WTC11 (cell line): ENCODE measurements at regions of chr12 and their contacts with region 1.

Region 1: DNA sequence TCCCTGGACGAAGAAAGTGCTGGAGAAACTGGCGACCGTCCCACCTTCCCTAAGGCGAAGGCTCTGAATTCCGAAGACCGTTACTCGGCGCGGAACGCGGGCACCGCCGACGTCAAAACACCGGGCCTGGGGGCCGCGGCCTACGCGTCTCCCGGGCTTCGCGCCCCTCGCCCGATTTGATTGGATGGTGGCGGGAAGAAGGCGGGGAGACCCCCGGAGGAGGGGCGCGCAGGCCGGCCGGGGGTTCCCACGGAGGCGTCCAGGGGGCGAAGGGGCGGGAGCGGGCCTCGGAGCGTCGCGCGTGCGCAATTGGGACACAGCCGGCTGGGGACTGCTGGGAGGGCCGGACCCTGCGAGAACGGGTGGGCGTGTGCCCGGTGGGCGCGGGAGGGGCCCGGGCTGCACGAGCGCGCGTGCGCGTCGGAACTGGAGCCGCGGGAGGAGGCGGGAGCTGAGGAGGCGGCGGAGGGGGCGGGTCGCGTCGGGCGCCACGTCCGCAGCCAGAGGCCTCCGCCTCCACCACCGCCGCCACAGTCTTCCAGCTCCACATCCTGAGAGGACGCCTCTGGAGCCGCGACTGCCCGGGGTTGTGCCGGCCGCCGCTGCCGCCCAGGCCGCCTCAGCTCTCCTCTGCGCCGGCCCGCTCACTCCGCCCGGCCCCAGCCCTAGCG is at the start of gene TMEM263:
- DNase-seq: peak; percentile 89
- ATAC-seq: peak; percentile 79
- H3K4me3 Mint-ChIP-seq: peak within 1 kb of the TSS; percentile 97
- H3K27ac Mint-ChIP-seq: peak within 1 kb of the TSS; percentile 94
- H3K4me1 Mint-ChIP-seq: peaks cover 8% of the 10 kb centered on the region
- H3K27me3 Mint-ChIP-seq: peaks cover 41% of the 10 kb centered on the region
- CTCF ChIP-seq: no peak
- total RNA-seq, gene TMEM263: 15.2 to 18.0 TPM (median 16.8 TPM) in 3 replicates

Region 2: GRCh38 chr12:106945261-106945851 is 10.2 kb before region 1 on chr12:
- CTCF ChIA-PET with region 1: no interaction called
- POLR2A ChIA-PET with region 1: no interaction called
- DNase-seq: no peak
- ATAC-seq: no peak
- H3K4me3 Mint-ChIP-seq: no peak overlapping the region
- H3K27ac Mint-ChIP-seq: no peak overlapping the region
- H3K4me1 Mint-ChIP-seq: no peaks in the 10 kb centered on the region
- H3K27me3 Mint-ChIP-seq: peaks cover 26% of the 10 kb centered on the region
- CTCF ChIP-seq: no peak

Region 3: GRCh38 chr12:107093417-107094182 is 138.1 kb after region 1 on chr12 and contains the start of gene CRY1:
- CTCF ChIA-PET with region 1: interaction called, 10 read pairs
- POLR2A ChIA-PET with region 1: no interaction called
- DNase-seq: peak; percentile 94
- ATAC-seq: peak; percentile 87
- H3K4me3 Mint-ChIP-seq: no peak within 1 kb of the TSS
- H3K27ac Mint-ChIP-seq: peak within 1 kb of the TSS; percentile 100
- H3K4me1 Mint-ChIP-seq: peaks cover 6% of the 10 kb centered on the region; the same call in 1 of the 2 replicates
- H3K27me3 Mint-ChIP-seq: peaks cover 9% of the 10 kb centered on the region; the same call in 1 of the 2 replicates
- CTCF ChIP-seq: no peak
- total RNA-seq, gene CRY1: 23.1 to 25.5 TPM (median 24.8 TPM) in 3 replicates